Stomach (tissue), 19 donors: ENCODE measurements at regions of chr12 and their contacts with region 1.

Region 1: GRCh38 chr12:70733385-70733784 is 96.2 kb upstream of the PTPRB start:
- DNase-seq: peak in 1 of 2 donors; percentile 88
- H3K4me3 ChIP-seq: no peak overlapping the region
- H3K27ac ChIP-seq: no peak overlapping the region
- H3K4me1 ChIP-seq: no peaks in the 10 kb centered on the region
- H3K27me3 ChIP-seq: peaks cover 0 to 5% (median 0%) of the 10 kb centered on the region in 3 donors
- CTCF ChIP-seq: peak in 5 of 7 experiments; percentile 40 to 60 (median 51)
- EP300 ChIP-seq: no peak
- POLR2A ChIP-seq: no peak

Region 2: GRCh38 chr12:70571705-70572268 is 161.6 kb before region 1 on chr12:
- intact Hi-C with region 1: no loop called
- DNase-seq: peak in 1 of 2 donors; percentile 38
- H3K4me3 ChIP-seq: no peak overlapping the region
- H3K27ac ChIP-seq: no peak overlapping the region
- H3K4me1 ChIP-seq: peaks cover 0 to 5% (median 0%) of the 10 kb centered on the region in 4 donors
- H3K27me3 ChIP-seq: no peaks in the 10 kb centered on the region
- CTCF ChIP-seq: no peak
- EP300 ChIP-seq: no peak
- POLR2A ChIP-seq: no peak

Region 3: DNA sequence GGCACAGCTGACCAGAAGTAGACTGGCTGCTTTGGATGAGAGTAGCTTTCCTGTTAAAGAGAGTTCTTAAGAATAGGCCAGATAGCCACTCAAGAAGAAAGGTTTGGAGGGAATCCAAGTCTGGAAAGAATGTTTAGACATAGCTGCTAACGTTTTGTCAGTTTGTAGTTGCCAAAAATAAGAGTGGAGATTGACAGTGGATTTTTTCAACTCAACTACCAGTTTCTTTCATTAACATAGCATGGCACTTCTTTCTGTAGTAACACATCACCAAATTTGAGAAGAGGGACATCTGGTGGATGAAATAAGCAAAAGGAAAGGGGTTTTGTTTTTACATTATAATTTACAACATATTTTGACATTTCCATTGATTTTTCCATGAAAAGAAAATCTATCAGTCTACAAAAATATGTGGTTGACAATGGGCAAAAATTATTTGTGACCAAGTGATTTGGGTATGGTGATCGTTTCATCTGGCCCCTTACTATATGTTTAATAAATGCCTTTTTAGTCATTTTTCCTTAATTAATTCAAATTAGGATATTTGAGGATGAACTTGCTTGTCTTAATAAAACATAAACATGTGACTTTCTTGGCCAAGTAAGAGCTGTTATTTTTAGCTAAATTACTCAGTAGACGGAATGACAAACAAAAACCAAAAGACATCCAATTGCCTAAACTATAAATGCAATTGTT is 116.0 kb after region 1 on chr12:
- intact Hi-C with region 1: loop called (anchors 10 kb)
- DNase-seq: peak in 1 of 2 donors; percentile 36
- H3K4me3 ChIP-seq: no peak overlapping the region
- H3K27ac ChIP-seq: no peak overlapping the region
- H3K4me1 ChIP-seq: no peaks in the 10 kb centered on the region
- H3K27me3 ChIP-seq: no peaks in the 10 kb centered on the region
- CTCF ChIP-seq: peak in 2 of 7 experiments; percentile 17 to 29
- EP300 ChIP-seq: no peak
- POLR2A ChIP-seq: no peak

Region 4: GRCh38 chr12:71019282-71019831 is 286.0 kb after region 1 on chr12:
- intact Hi-C with region 1: loop called (anchors 5 kb)
- DNase-seq: no peak
- H3K4me3 ChIP-seq: no peak overlapping the region
- H3K27ac ChIP-seq: no peak overlapping the region
- H3K4me1 ChIP-seq: no peaks in the 10 kb centered on the region
- H3K27me3 ChIP-seq: no peaks in the 10 kb centered on the region
- CTCF ChIP-seq: no peak
- EP300 ChIP-seq: no peak
- POLR2A ChIP-seq: no peak